Heart left ventricle (tissue), 16 donors: ENCODE measurements at regions of chr9 and their contacts with region 1.

Region 1: GRCh38 chr9:13427587-13427986 is 148.1 kb upstream of the MPDZ start:
- DNase-seq: no peak
- ATAC-seq: peak in 2 of 4 donors; percentile 42 to 47
- H3K4me3 ChIP-seq: peak overlapping the region in 1 of 12 donors; percentile 12
- H3K27ac ChIP-seq: peak overlapping the region in 9 of 12 donors; percentile 0 to 63 (median 33)
- H3K4me1 ChIP-seq: peaks cover 0 to 23% (median 13%) of the 10 kb centered on the region in 12 donors
- H3K27me3 ChIP-seq: no peaks in the 10 kb centered on the region
- CTCF ChIP-seq: peak; percentile 68 to 88 (median 82)
- POLR2A ChIP-seq: no peak

Region 2: GRCh38 chr9:13351778-13352386 is 75.7 kb before region 1 on chr9:
- intact Hi-C with region 1: loop called in 1 of 10 experiments (anchors 10 kb)
- DNase-seq: peak in 1 of 5 donors; percentile 24
- ATAC-seq: peak in 2 of 4 donors; percentile 46 to 47
- H3K4me3 ChIP-seq: no peak overlapping the region
- H3K27ac ChIP-seq: no peak overlapping the region
- H3K4me1 ChIP-seq: no peaks in the 10 kb centered on the region
- H3K27me3 ChIP-seq: no peaks in the 10 kb centered on the region
- CTCF ChIP-seq: peak; percentile 49 to 82 (median 68)
- POLR2A ChIP-seq: no peak

Region 3: GRCh38 chr9:13500034-13500433 is 72.4 kb after region 1 on chr9:
- intact Hi-C with region 1: no loop called
- DNase-seq: peak in 2 of 5 donors; percentile 36
- ATAC-seq: peak in 3 of 4 donors; percentile 37 to 67 (median 59)
- H3K4me3 ChIP-seq: no peak overlapping the region
- H3K27ac ChIP-seq: no peak overlapping the region
- H3K4me1 ChIP-seq: no peaks in the 10 kb centered on the region
- H3K27me3 ChIP-seq: no peaks in the 10 kb centered on the region
- CTCF ChIP-seq: no peak
- POLR2A ChIP-seq: no peak

Region 4: DNA sequence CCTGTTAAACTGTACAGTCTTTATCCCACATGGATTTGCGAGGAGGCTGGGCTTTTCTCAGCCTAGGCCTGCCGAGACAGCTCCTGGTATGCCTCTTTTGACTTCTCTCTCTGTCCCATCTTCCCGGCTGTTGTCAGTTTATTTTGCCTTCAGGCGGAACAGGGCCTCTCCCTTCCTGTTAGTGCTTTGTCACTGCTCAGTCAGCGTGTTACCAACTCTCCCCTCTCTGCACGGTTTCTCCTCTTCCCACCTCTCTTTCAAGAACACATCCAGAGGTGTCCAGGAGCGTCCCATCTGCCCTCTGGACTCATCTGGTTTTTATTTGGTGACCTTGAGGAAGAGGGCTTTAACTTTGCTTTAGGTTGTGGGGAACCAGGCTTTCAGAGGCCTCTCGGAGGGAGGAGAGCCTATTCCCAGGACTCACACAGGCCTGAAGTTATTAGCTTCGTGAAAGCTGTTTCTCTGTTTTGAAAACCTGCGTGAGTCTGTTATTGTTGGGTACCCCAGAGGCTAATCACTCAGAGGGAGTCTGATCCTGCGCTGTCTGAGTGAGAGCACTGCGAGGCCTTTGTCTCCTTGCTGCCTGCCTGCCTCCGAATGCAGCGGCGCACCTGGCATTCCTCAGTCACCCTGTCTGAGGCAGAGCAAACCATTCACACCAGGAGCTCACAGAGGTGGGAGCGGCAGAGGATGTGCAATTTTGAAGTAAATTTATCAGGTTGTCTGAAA is 86.3 kb after region 1 on chr9:
- intact Hi-C with region 1: no loop called
- DNase-seq: peak in 1 of 5 donors; percentile 31
- ATAC-seq: peak; percentile 18 to 65 (median 56)
- H3K4me3 ChIP-seq: no peak overlapping the region
- H3K27ac ChIP-seq: peak overlapping the region; percentile 37 to 78 (median 66)
- H3K4me1 ChIP-seq: peaks cover 0 to 28% (median 12%) of the 10 kb centered on the region in 12 donors
- H3K27me3 ChIP-seq: no peaks in the 10 kb centered on the region
- CTCF ChIP-seq: no peak
- POLR2A ChIP-seq: no peak

Region 5: DNA sequence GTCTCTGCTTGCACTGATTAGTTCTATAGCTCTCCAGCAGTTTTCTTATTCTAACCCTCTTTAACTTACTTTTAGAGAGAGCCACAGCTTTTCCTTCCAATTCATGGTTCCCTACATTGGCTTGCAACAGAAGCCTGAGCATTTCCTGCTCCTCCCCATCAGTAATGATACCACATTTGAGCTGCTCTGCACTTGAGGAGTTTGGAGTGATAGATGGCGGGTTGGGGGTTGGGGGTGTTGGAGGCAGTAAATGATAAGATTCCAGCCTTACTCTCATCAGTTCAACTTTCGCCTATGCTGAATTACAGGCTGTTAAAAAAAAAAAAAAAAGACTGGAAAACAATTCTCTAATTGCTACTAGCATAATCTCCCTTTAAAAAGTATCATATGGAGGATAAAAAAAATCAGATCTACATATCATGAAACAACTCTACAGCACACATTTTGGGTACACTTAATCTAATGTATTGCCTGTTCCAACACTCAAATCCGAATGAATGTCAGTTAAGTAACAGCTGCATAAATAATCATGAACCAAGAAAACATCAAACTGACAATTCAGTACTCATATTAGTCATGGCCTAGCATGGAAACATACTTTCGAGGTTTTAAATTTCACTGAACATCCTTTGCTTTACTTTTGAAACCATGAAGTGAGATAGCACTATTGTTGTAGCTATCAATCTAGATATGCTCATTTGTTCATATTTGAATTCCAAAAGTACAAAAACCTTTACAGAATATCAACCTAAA is 661.6 kb after region 1 on chr9:
- intact Hi-C with region 1: loop called in 1 of 10 experiments (anchors 2 kb)
- DNase-seq: no peak
- ATAC-seq: peak in 1 of 4 donors; percentile 16
- H3K4me3 ChIP-seq: no peak overlapping the region
- H3K27ac ChIP-seq: no peak overlapping the region
- H3K4me1 ChIP-seq: peaks cover 0 to 34% (median 18%) of the 10 kb centered on the region in 12 donors
- H3K27me3 ChIP-seq: no peaks in the 10 kb centered on the region
- CTCF ChIP-seq: no peak
- POLR2A ChIP-seq: no peak

Region 6: DNA sequence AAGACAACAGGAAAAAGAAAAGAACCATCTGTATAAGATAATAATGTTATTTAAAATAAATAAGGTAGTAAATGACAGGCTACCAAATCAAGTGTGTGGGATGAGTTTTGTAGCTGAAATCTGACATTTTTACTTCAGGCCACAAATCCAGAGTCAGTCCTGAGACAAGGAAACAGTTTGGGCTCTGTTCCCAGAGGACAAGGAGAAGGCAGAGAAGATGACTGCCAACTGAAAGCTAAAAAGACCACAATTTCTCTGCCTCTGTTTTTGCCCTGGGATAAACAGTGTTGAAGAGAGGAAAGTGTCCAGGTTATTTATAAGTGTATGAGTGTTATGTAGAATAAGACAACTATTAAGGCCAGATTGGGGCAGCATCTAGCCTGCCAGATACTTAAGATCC is 705.8 kb after region 1 on chr9:
- intact Hi-C with region 1: loop called in 1 of 10 experiments (anchors 10 kb)
- DNase-seq: no peak
- ATAC-seq: peak in 2 of 4 donors; percentile 10 to 39
- H3K4me3 ChIP-seq: no peak overlapping the region
- H3K27ac ChIP-seq: peak overlapping the region in 6 of 12 donors; percentile 1 to 37 (median 30)
- H3K4me1 ChIP-seq: peaks cover 0 to 24% (median 10%) of the 10 kb centered on the region in 12 donors
- H3K27me3 ChIP-seq: no peaks in the 10 kb centered on the region
- CTCF ChIP-seq: no peak
- POLR2A ChIP-seq: no peak

Region 7: GRCh38 chr9:14358523-14358922 is 930.9 kb after region 1 on chr9:
- intact Hi-C with region 1: loop called (anchors 1 to 5 kb)
- DNase-seq: no peak
- ATAC-seq: no peak
- H3K4me3 ChIP-seq: no peak overlapping the region
- H3K27ac ChIP-seq: no peak overlapping the region
- H3K4me1 ChIP-seq: peaks cover 0 to 27% (median 7%) of the 10 kb centered on the region in 12 donors
- H3K27me3 ChIP-seq: no peaks in the 10 kb centered on the region
- CTCF ChIP-seq: no peak
- POLR2A ChIP-seq: no peak

Region 8: DNA sequence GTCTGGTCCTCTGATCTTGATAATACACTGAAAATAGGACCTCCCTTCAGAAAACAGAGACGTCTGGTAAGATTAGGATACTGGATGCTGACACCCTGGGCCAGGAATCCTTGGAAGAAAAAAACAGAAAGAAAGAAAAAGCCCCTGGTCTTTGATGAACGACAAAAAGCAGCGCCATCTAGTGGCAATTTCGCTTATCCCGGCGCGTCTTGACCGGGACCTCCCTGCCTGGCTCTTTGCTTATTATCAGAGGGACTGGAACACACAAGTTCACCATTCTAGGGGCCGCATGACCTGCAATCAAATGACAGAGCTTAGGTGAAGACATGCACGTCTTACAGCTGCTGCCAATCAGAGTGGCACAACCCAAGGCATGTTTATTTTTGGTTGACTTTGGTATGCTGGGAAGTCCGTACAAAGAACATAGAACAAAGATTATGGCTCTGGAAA is 1001.2 kb after region 1 on chr9:
- intact Hi-C with region 1: loop called in 6 of 10 experiments (anchors 2 to 10 kb)
- DNase-seq: peak; percentile 67 to 80 (median 74)
- ATAC-seq: peak; percentile 69 to 80 (median 76)
- H3K4me3 ChIP-seq: no peak overlapping the region
- H3K27ac ChIP-seq: peak overlapping the region in 7 of 12 donors; percentile 23 to 54 (median 37)
- H3K4me1 ChIP-seq: peaks cover 0 to 40% (median 17%) of the 10 kb centered on the region in 12 donors
- H3K27me3 ChIP-seq: no peaks in the 10 kb centered on the region
- CTCF ChIP-seq: peak; percentile 69 to 86 (median 80)
- POLR2A ChIP-seq: no peak